ENCODE measurements at regions of chr7 and their contacts with region 1.

Region 1: DNA sequence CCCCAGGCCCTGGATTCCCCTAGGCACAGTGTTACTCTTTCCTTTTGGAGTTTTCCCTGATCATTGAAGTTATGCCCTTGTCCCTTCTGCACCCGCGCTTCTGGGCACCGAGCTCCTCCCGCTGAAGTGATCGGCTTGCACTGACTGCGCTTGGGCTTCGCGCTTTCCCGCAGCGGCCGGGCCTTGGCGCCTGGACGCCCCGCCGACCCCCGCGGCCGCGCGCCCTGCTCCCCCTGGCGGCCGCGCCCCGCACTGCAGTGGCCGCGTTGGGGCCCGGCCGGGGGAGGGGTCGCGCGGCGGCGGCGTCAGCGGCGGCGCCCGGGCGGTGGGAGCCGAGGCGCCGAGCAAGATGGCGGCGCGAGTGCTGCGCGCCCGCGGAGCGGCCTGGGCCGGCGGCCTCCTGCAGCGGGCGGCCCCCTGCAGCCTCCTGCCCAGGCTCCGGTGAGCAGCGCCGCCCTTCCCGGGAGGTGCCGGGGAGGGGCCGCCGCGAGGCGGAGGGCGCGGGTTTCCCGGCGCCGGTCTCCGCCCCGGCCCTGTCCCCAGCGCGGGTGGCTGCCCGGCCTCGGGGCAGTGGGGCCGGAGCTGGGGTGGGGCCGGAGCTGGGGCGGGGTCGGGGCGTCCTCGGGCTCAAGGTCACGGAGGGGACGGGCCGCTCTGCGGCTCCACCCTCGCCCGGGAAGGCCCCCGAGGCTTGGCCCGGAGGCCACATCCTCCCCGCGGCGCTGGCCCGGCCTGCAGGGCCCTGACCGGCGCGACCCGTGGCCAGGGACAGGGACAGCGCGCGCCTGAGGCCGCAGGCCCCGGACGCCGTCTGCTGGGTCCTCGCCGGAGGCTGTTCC is at the start of gene NIPSNAP2:
- DNase-seq: peak; percentile 67
- H3K4me3 Mint-ChIP-seq: peak within 1 kb of the TSS; percentile 84
- H3K27ac Mint-ChIP-seq: peak within 1 kb of the TSS; percentile 85
- H3K4me1 Mint-ChIP-seq: peaks cover 32% of the 10 kb centered on the region
- H3K27me3 Mint-ChIP-seq: no peaks in the 10 kb centered on the region
- total RNA-seq, gene NIPSNAP2: 55.7 to 57.4 TPM

Region 2: GRCh38 chr7:55387062-55387965 is 577.2 kb before region 1 on chr7:
- CTCF ChIA-PET with region 1: no interaction called
- POLR2A ChIA-PET with region 1: no interaction called
- intact Hi-C with region 1: no loop called
- DNase-seq: no peak
- H3K4me3 Mint-ChIP-seq: no peak overlapping the region
- H3K27ac Mint-ChIP-seq: no peak overlapping the region
- H3K4me1 Mint-ChIP-seq: peaks cover 7% of the 10 kb centered on the region
- H3K27me3 Mint-ChIP-seq: no peaks in the 10 kb centered on the region

Region 3: GRCh38 chr7:55951637-55952351 is 12.7 kb before region 1 on chr7 and contains the start of gene MRPS17:
- CTCF ChIA-PET with region 1: interaction called, 9 read pairs
- POLR2A ChIA-PET with region 1: interaction called, 3 read pairs
- intact Hi-C with region 1: loop called (anchors 1 kb)
- DNase-seq: peak; percentile 96
- H3K4me3 Mint-ChIP-seq: peak within 1 kb of the TSS; percentile 86
- H3K27ac Mint-ChIP-seq: peak within 1 kb of the TSS; percentile 85
- H3K4me1 Mint-ChIP-seq: peaks cover 20% of the 10 kb centered on the region
- H3K27me3 Mint-ChIP-seq: peaks cover 3% of the 10 kb centered on the region
- total RNA-seq, gene MRPS17: 21.7 to 22.3 TPM

Measured in activated CD4-positive, alpha-beta memory T cell treated with anti-CD3 and anti-CD28 coated beads for 36 hours (primary cell).